ENCODE measurements at regions of chr1 and their contacts with region 1.

Region 1: DNA sequence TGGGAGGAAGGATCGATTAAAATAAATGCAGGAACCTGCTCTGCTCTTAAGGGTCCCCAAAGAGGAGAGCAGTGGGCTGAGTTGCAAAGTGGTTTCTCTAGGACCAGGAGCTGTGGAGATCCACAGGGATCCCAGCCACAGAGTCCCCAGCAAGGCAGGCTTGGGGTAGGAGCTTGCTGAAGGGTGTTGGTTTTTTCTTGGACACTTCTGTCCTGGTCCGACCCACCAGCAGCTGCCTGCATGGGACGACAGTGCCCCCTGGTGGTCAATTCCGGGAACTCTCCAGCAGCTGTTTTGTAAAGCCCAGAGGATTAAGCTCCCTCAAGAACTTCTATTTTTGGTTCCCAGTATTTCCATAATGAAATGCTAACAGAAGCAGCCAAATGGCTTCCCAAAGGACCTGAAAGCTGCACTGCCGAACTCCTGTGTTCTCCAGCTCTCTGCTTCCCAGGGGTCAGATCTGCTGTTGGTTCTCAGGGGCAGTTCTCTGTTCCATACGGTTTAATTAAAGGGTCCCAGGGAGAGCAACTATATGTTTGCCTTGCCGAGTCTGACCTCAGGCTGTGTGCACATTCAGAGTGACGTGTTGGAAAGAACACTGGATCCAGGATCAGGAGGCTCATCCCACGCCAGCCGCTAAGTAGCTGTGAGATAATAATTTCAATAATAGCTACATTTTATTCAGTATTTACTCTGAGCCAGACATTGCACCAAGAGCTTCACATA is 23.2 kb downstream of the NENF start:
- DNase-seq: peak; percentile 89
- H3K4me3 Mint-ChIP-seq: no peak overlapping the region
- H3K27ac Mint-ChIP-seq: no peak overlapping the region
- H3K4me1 Mint-ChIP-seq: peaks cover 3% of the 10 kb centered on the region
- H3K27me3 Mint-ChIP-seq: no peaks in the 10 kb centered on the region

Region 2: GRCh38 chr1:211557894-211558625 is 897.9 kb before region 1 on chr1:
- CTCF ChIA-PET with region 1: no interaction called
- intact Hi-C with region 1: no loop called
- DNase-seq: no peak
- H3K4me3 Mint-ChIP-seq: no peak overlapping the region
- H3K27ac Mint-ChIP-seq: no peak overlapping the region
- H3K4me1 Mint-ChIP-seq: no peaks in the 10 kb centered on the region
- H3K27me3 Mint-ChIP-seq: no peaks in the 10 kb centered on the region

Region 3: GRCh38 chr1:211680752-211681327 is 775.1 kb before region 1 on chr1:
- CTCF ChIA-PET with region 1: interaction called, 82 read pairs
- intact Hi-C with region 1: loop called (anchors 1 kb)
- DNase-seq: peak; percentile 80
- H3K4me3 Mint-ChIP-seq: no peak overlapping the region
- H3K27ac Mint-ChIP-seq: peak overlapping the region; percentile 24
- H3K4me1 Mint-ChIP-seq: peaks cover 7% of the 10 kb centered on the region
- H3K27me3 Mint-ChIP-seq: no peaks in the 10 kb centered on the region

Region 4: GRCh38 chr1:212045981-212046380 is 410.0 kb before region 1 on chr1:
- CTCF ChIA-PET with region 1: no interaction called
- intact Hi-C with region 1: no loop called
- DNase-seq: no peak
- H3K4me3 Mint-ChIP-seq: no peak overlapping the region
- H3K27ac Mint-ChIP-seq: no peak overlapping the region
- H3K4me1 Mint-ChIP-seq: peaks cover 10% of the 10 kb centered on the region
- H3K27me3 Mint-ChIP-seq: peaks cover under 1% of the 10 kb centered on the region

Region 5: GRCh38 chr1:212070720-212071302 is 385.2 kb before region 1 on chr1:
- CTCF ChIA-PET with region 1: interaction called, 31 read pairs
- intact Hi-C with region 1: loop called (anchors 1 kb)
- DNase-seq: no peak
- H3K4me3 Mint-ChIP-seq: no peak overlapping the region
- H3K27ac Mint-ChIP-seq: no peak overlapping the region
- H3K4me1 Mint-ChIP-seq: no peaks in the 10 kb centered on the region
- H3K27me3 Mint-ChIP-seq: no peaks in the 10 kb centered on the region

Region 6: DNA sequence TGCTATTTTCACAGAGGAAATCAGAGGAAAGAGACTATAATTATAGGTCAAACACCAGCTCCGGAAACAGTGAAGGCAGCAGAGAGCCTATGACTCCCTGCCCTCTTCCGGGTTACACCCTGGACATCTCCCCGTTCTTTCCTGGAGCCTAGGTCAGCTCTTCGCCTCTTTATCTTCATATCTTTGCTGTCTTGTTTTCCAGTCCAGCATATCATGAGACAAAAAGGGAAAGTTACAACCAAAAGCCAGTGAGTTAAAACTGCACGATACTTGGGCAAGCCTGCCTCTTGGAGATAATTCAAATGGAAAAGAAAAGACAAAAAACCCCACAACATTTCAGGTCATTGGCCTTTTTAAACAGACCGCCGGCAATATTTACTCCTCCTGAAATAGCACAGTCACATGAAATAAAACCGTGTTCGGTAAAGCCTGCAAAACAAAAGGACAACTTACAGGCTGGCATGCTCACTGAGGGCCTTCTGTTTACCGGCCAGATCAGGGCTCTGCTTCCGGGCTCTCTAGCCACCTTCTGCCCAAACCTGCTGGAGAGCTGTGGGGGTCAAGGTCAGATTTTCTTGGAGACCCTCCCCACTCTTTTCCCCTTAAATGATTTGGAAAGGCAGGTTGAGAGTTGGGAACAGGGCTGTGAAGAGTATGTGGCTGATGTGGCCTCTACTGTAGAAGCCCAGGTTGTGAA is 213.5 kb before region 1 on chr1:
- CTCF ChIA-PET with region 1: no interaction called
- intact Hi-C with region 1: no loop called
- DNase-seq: no peak
- H3K4me3 Mint-ChIP-seq: no peak overlapping the region
- H3K27ac Mint-ChIP-seq: no peak overlapping the region
- H3K4me1 Mint-ChIP-seq: peaks cover 4% of the 10 kb centered on the region
- H3K27me3 Mint-ChIP-seq: peaks cover 7% of the 10 kb centered on the region

Region 7: GRCh38 chr1:212375986-212376385 is 80.0 kb before region 1 on chr1:
- CTCF ChIA-PET with region 1: interaction called, 13 read pairs
- intact Hi-C with region 1: no loop called
- DNase-seq: no peak
- H3K4me3 Mint-ChIP-seq: no peak overlapping the region
- H3K27ac Mint-ChIP-seq: no peak overlapping the region
- H3K4me1 Mint-ChIP-seq: no peaks in the 10 kb centered on the region
- H3K27me3 Mint-ChIP-seq: no peaks in the 10 kb centered on the region

Region 8: DNA sequence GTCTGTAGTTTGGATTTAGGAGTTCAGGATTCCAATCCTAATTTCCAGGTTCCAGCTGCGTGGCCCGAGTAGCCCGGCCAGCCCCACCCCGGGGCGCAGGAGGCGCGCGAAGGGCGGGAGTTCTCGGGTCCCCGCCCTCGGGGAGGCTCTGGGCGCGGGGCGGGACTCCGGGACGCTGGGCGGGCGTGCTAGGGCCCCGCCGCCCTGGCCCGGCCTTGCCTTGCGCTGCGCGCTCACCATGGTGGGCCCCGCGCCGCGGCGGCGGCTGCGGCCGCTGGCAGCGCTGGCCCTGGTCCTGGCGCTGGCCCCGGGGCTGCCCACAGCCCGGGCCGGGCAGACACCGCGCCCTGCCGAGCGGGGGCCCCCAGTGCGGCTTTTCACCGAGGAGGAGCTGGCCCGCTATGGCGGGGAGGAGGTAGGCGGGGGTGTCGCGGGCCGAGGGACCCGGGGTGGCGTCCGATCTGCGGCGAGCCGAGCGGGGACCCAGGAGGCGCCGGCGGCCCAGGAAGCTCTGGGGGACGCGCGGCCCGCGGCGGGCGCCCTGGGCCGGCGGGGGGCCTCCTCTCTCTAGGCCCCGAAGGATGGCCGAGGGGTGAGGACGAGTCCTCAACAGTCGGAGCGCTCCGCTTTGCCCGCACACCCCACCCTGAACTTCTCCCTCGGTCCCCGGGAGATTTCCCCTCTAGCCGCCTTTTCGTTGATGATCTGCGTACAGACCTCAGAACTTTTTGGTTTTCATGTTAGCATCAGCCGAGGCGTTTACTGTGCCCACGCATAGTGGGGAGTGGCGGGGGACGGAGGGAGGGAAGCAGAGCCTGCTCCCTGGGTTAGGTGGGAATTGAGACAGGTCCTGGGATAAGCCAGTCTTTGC is 23.0 kb before region 1 on chr1 and contains the start of gene NENF:
- CTCF ChIA-PET with region 1: interaction called, 47 read pairs
- intact Hi-C with region 1: no loop called
- DNase-seq: peak; percentile 74
- H3K4me3 Mint-ChIP-seq: peak within 1 kb of the TSS; percentile 76
- H3K27ac Mint-ChIP-seq: no peak within 1 kb of the TSS
- H3K4me1 Mint-ChIP-seq: peaks cover 37% of the 10 kb centered on the region
- H3K27me3 Mint-ChIP-seq: no peaks in the 10 kb centered on the region
- total RNA-seq, gene NENF: 27.0 to 30.9 TPM

Region 9: GRCh38 chr1:212665241-212666115 is 209.5 kb after region 1 on chr1:
- CTCF ChIA-PET with region 1: interaction called, 14 read pairs
- intact Hi-C with region 1: loop called (anchors 1 kb)
- DNase-seq: peak; percentile 84
- H3K4me3 Mint-ChIP-seq: peak overlapping the region; percentile 70
- H3K27ac Mint-ChIP-seq: peak overlapping the region; percentile 56
- H3K4me1 Mint-ChIP-seq: peaks cover 5% of the 10 kb centered on the region
- H3K27me3 Mint-ChIP-seq: peaks cover 9% of the 10 kb centered on the region